SK-N-SH (cell line): ENCODE measurements at regions of chr2 and their contacts with region 1.

Region 1: DNA sequence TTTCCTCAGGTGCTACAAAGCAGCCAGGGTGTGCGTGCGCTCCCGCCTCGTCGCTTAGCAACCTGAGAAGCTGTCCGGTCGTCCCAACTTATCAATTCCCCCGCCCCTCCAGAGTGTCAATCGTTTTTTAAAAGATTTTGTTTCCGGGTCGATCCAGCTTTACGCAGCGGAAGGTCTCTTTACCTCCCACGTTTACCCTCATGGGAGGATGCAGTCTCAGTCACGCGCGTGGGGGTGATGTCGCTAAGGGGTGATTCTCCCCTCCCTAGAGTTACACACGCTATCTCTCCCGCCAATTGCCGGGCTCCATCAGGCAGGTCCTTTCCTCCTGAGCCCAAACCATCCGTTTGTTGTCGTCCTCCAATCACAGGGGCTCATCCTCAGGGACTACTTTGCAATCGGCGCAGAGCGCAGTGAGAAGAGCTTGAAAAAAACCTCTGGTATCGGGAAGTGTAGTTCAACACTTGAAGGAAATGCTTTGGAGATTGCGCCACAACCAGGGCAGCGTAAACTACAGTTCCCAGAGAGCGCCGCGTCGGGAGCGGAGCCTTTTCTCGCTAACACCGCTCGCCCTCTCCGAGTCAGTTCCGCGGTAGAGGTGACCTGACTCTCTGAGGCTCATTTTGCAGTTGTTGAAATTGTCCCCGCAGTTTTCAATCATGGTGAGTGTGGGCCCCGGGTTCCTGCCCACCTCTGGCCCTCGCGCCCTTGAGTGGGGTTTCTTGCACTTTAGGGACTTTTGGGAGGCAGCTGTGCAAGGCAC is at the starts of genes MDH1 and WDPCP:
- DNase-seq: peak; percentile 79
- H3K4me3 ChIP-seq: peak within 1 kb of the TSS; percentile 97 to 100
- H3K27ac ChIP-seq: peak within 1 kb of the TSS; percentile 89 to 93
- H3K4me1 ChIP-seq: peaks cover 6 to 11% of the 10 kb centered on the region in 2 experiments
- H3K27me3 ChIP-seq: no peaks in the 10 kb centered on the region
- CTCF ChIP-seq: no peak
- EP300 ChIP-seq: no peak
- RAD21 ChIP-seq: no peak
- polyA plus RNA-seq, gene MDH1: 201 and 267 TPM in 2 replicates
- polyA plus RNA-seq, gene WDPCP: 3.1 and 5.5 TPM in 2 replicates

Region 2: DNA sequence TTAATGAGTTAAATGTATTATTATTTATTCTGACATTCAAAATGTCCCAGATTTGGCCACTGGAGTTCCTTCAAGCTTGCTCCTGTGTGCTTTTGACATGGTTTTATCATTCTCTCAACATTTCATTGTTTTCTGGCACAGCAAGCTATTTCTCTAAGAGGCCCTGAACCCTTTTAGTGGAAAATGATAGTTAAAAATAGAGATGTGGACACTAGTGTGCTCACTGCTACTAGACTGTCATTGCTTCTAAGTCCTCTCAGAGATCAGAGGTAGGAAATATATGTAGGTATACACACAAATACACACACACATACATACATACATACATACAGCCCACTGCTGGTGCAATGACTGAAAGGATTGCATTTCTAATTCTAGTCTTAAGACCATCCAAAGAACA is 25.8 kb before region 1 on chr2:
- CTCF ChIA-PET with region 1: no interaction called
- POLR2A ChIA-PET with region 1: no interaction called
- DNase-seq: no peak
- H3K4me3 ChIP-seq: no peak overlapping the region
- H3K27ac ChIP-seq: no peak overlapping the region
- H3K4me1 ChIP-seq: no peaks in the 10 kb centered on the region
- H3K27me3 ChIP-seq: no peaks in the 10 kb centered on the region
- CTCF ChIP-seq: no peak
- EP300 ChIP-seq: no peak
- RAD21 ChIP-seq: no peak

Region 3: GRCh38 chr2:63729362-63729761 is 140.8 kb after region 1 on chr2:
- CTCF ChIA-PET with region 1: no interaction called
- POLR2A ChIA-PET with region 1: no interaction called
- DNase-seq: no peak
- H3K4me3 ChIP-seq: no peak overlapping the region
- H3K27ac ChIP-seq: no peak overlapping the region
- H3K4me1 ChIP-seq: no peaks in the 10 kb centered on the region; a peak in 2 of 4 replicates
- H3K27me3 ChIP-seq: no peaks in the 10 kb centered on the region
- CTCF ChIP-seq: no peak
- EP300 ChIP-seq: no peak
- RAD21 ChIP-seq: no peak

Region 4: DNA sequence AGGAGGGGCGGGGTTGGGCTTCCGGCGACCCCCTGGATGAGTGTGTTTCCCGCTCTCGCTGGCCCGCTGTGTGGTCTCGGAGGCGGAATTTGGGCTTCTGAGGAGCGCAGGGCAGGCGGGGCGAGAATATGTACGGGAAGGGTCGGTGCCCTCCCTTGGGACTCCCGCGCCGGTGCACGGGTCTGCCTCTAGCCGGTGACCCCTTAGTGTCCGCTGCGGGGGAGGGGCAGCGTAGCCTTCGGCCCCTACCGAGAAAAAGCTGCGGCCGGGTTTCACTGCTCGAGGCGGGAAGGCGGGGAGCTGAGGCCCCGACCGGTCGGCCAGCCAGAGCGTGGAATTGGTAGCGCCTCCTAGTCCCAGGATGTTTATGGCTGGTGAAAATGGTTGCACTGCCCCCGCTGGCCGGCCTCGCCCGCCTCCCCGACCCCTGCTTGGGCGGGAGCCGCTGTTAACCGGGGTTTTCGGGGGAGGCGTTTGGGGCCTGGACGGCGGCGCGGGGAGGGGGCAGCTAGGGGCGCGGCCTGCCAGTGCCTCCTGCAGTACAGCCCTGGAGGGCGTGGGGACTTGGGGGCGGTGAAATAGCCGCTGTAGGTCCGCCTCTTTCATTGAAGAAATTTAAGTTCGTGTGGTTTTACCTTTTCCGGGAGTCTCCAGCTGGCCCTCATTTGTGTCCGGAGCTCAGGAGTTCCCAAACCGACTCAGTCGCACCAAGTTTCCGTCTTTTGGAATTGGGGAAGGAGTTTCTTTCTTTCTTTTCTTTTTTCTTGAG is 252.9 kb after region 1 on chr2 and contains the start of gene UGP2:
- CTCF ChIA-PET with region 1: no interaction called
- POLR2A ChIA-PET with region 1: interaction called, 10 read pairs
- DNase-seq: peak; percentile 83
- H3K4me3 ChIP-seq: peak within 1 kb of the TSS; percentile 80 to 96
- H3K27ac ChIP-seq: peak within 1 kb of the TSS; percentile 92
- H3K4me1 ChIP-seq: peaks cover 6 to 22% of the 10 kb centered on the region in 2 experiments
- H3K27me3 ChIP-seq: no peaks in the 10 kb centered on the region
- CTCF ChIP-seq: peak; percentile 37
- EP300 ChIP-seq: no peak
- RAD21 ChIP-seq: no peak; the same call in 1 of the 2 replicates
- polyA plus RNA-seq, gene UGP2: 30.1 and 39.1 TPM in 2 replicates